Pancreas (tissue), 10 donors: ENCODE measurements at regions of chr5 and their contacts with region 1.

Region 1: GRCh38 chr5:9361835-9362234 is 184.0 kb downstream of the SEMA5A start:
- DNase-seq: peak in 5 of 6 donors; percentile 48 to 75 (median 59)
- ATAC-seq: peak; percentile 74 to 94 (median 88)
- H3K4me3 ChIP-seq: no peak overlapping the region
- H3K27ac ChIP-seq: no peak overlapping the region
- H3K4me1 ChIP-seq: no peaks in the 10 kb centered on the region
- H3K27me3 ChIP-seq: no peaks in the 10 kb centered on the region
- CTCF ChIP-seq: peak; percentile 66 to 81 (median 76)

Region 2: DNA sequence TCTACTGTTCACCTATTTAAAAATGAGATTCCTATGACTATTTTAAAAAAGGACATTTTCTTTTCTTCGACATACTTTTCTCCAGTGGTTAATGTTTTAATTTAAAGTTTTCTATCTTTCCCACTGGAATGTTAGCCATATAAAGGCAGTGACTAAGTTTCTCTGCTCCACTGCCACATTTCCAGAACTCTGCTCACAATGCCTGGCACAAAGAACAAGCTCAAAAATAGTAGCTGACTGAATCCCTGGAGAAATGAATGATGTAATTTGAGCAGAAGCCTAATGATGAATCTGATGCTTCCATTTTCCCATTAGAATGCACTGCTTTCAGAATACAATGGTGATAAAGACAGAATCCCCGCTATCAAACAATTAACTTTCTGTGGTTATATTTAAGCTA is 675.1 kb before region 1 on chr5:
- intact Hi-C with region 1: no loop called
- DNase-seq: no peak
- ATAC-seq: no peak
- H3K4me3 ChIP-seq: no peak overlapping the region
- H3K27ac ChIP-seq: no peak overlapping the region
- H3K4me1 ChIP-seq: peaks cover 7 to 12% (median 10%) of the 10 kb centered on the region in 3 donors
- H3K27me3 ChIP-seq: no peaks in the 10 kb centered on the region
- CTCF ChIP-seq: no peak

Region 3: GRCh38 chr5:9507974-9508373 is 146.1 kb after region 1 on chr5:
- intact Hi-C with region 1: loop called in 1 of 3 experiments (anchors 10 kb)
- DNase-seq: no peak
- ATAC-seq: peak in 1 of 4 donors; percentile 28
- H3K4me3 ChIP-seq: no peak overlapping the region
- H3K27ac ChIP-seq: no peak overlapping the region
- H3K4me1 ChIP-seq: no peaks in the 10 kb centered on the region
- H3K27me3 ChIP-seq: no peaks in the 10 kb centered on the region
- CTCF ChIP-seq: no peak

Region 4: DNA sequence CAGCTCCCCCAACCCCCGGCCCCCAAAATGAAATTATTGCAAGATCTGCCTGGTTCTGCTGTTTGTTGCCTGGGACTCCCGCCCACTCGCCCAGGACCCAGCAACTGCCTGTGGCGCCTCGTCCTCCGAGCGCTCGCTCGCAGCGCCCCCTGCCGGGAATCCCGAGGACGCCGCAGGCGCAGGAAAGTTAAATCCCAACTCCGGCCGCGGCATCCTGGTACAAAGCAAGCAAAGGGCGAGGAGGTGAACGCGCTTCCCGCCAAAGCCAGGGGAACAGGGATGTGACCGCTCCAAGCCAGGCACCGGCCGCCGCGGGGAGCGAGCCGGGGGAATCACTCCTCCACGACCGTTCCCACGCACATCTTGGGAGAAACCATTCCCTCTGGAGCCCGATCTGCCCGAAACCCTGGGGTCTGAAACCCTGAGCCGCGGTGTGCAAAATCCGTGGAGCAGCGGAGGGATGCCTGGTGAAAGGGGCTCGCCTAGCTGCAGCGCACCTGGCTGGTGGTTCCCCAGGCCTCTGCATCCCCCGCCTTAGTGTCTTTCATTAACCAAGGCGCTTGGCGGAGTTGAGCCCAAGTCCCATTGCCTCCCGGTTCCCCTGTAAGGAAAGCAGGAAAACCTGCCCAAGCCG is 182.8 kb after region 1 on chr5:
- intact Hi-C with region 1: loop called in 1 of 3 experiments (anchors 10 kb)
- DNase-seq: peak; percentile 82 to 98 (median 90)
- ATAC-seq: peak; percentile 76 to 87 (median 82)
- H3K4me3 ChIP-seq: peak overlapping the region; percentile 60 to 89 (median 82)
- H3K27ac ChIP-seq: peak overlapping the region in 2 of 4 donors; percentile 48 to 50
- H3K4me1 ChIP-seq: no peaks in the 10 kb centered on the region
- H3K27me3 ChIP-seq: no peaks in the 10 kb centered on the region
- CTCF ChIP-seq: peak; percentile 80 to 90 (median 82)